CD8-positive, alpha-beta T cell (primary cell): ENCODE measurements at regions of chr7 and their contacts with region 1.

Region 1: GRCh38 chr7:1532483-1533424 is 2.3 kb downstream of the MAFK start:
- DNase-seq: peak in 8 of 9 experiments; percentile 42 to 75 (median 68)
- ATAC-seq: peak; percentile 48
- H3K4me3 ChIP-seq: peak overlapping the region; percentile 65 to 66
- H3K4me3 Mint-ChIP-seq: peak overlapping the region; percentile 89
- H3K27ac ChIP-seq: peak overlapping the region; percentile 82 to 90
- H3K27ac Mint-ChIP-seq: peak overlapping the region; percentile 99
- H3K4me1 ChIP-seq: peaks cover 33% of the 10 kb centered on the region
- H3K4me1 Mint-ChIP-seq: peaks cover 38% of the 10 kb centered on the region
- H3K27me3 ChIP-seq: no peaks in the 10 kb centered on the region
- H3K27me3 Mint-ChIP-seq: no peaks in the 10 kb centered on the region
- CTCF ChIP-seq: no peak

Region 2: DNA sequence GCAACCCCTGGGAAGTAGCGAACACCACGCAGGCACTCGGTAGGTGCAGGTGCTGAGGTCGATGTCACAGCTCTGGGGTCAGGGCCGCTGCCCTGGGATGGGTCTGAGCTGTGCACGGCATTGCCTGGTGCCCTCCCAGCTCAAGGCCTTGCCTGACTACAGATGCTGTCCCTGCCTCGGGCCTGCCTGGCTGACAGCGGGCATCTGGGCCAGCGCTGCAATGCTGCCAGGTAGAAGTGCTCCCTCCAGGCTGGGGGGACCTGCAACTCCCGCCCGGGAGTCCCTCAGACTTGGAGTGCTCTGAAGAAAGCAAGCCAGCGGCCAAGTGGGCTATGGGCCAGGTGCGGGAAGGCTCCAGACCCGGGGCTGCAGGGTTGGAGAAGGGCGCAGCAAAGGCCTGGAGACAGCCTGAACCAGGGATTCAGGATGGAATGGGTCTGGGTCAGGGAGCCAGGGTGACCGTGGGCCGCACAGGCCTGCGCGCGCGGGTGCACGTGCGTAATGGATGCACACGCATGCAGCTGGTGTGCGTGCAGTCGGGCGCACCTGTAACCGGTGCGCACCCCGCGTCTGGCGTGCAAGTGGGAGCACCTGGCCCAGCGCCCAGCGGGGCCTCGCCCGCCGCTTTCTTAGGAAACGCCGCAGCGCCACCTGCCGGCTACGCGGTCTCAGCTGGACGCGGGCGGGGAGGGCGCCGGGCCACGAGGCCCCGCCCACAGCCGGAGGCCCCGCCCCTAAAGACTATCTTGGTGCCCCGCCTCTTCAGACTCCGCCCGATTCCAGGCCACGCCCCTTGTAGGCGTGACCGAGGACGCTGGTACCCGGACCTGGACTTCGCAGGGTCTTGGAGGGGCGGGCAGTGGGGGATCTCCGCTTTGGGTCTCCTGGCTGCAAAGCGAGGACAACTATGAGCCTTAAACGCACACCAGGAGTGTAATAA is 120.2 kb before region 1 on chr7:
- CTCF ChIA-PET with region 1: no interaction called
- POLR2A ChIA-PET with region 1: no interaction called
- intact Hi-C with region 1: loop called in 1 of 2 experiments (anchors 5 kb)
- DNase-seq: peak; percentile 80 to 97 (median 89)
- ATAC-seq: peak; percentile 91
- H3K4me3 ChIP-seq: peak overlapping the region; percentile 23 to 30
- H3K4me3 Mint-ChIP-seq: peak overlapping the region; percentile 61
- H3K27ac ChIP-seq: peak overlapping the region in 1 of 2 experiments; percentile 22
- H3K27ac Mint-ChIP-seq: no peak overlapping the region
- H3K4me1 ChIP-seq: peaks cover 24% of the 10 kb centered on the region
- H3K4me1 Mint-ChIP-seq: peaks cover 13% of the 10 kb centered on the region
- H3K27me3 ChIP-seq: peaks cover 0 to 3% of the 10 kb centered on the region in 2 experiments
- H3K27me3 Mint-ChIP-seq: peaks cover 6% of the 10 kb centered on the region
- CTCF ChIP-seq: peak; percentile 81

Region 3: DNA sequence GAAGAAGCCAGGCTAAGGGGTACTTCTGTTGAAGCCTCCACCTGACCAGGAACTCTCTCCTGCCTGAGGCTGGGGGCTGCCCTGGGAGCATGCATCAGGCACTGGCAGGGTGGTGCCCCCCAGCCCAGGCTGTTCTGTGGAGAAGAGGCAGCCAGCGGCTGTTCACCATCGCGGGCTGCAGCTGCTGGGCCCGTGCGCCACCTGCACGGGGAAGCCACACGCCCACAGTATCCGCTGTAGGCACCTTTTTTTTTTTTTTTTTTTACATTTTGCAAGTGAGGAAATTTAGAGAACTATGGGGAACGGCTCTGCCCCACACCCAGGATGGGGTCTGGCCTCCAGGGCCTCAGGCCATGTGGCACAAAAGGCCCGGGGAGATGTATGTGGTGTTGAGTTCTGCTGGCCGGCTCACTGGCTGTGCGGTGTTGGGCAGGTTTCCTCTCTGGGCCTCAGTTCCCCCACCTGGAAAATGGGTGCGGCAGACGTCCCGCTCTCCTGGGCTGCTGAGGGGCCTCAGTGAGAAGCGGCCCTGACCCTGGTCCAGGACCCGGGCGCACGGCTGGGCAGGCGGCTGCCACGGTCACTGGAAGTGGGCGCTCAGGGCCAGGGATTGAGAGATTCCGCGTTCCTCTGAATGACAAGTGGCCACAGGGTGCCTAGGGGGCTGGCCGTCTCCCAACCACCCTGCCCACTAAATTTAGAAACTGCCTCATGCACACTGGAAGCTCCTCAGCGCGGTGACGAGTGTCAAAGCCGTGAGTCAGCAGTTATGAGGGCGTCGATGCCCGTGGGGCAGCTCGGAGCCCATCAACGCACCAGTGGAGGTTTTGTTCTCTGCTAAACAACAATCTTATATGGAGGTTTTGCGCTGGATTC is 19.7 kb before region 1 on chr7:
- CTCF ChIA-PET with region 1: interaction called, 4 read pairs
- POLR2A ChIA-PET with region 1: interaction called, 4 read pairs
- intact Hi-C with region 1: loop called in 1 of 2 experiments (anchors 2 kb)
- DNase-seq: peak in 8 of 9 experiments; percentile 38 to 76 (median 58)
- ATAC-seq: peak; percentile 91
- H3K4me3 ChIP-seq: no peak overlapping the region
- H3K4me3 Mint-ChIP-seq: peak overlapping the region; percentile 35
- H3K27ac ChIP-seq: no peak overlapping the region
- H3K27ac Mint-ChIP-seq: peak overlapping the region; percentile 69
- H3K4me1 ChIP-seq: peaks cover 43% of the 10 kb centered on the region
- H3K4me1 Mint-ChIP-seq: peaks cover 36% of the 10 kb centered on the region
- H3K27me3 ChIP-seq: no peaks in the 10 kb centered on the region
- H3K27me3 Mint-ChIP-seq: no peaks in the 10 kb centered on the region
- CTCF ChIP-seq: no peak

Region 4: DNA sequence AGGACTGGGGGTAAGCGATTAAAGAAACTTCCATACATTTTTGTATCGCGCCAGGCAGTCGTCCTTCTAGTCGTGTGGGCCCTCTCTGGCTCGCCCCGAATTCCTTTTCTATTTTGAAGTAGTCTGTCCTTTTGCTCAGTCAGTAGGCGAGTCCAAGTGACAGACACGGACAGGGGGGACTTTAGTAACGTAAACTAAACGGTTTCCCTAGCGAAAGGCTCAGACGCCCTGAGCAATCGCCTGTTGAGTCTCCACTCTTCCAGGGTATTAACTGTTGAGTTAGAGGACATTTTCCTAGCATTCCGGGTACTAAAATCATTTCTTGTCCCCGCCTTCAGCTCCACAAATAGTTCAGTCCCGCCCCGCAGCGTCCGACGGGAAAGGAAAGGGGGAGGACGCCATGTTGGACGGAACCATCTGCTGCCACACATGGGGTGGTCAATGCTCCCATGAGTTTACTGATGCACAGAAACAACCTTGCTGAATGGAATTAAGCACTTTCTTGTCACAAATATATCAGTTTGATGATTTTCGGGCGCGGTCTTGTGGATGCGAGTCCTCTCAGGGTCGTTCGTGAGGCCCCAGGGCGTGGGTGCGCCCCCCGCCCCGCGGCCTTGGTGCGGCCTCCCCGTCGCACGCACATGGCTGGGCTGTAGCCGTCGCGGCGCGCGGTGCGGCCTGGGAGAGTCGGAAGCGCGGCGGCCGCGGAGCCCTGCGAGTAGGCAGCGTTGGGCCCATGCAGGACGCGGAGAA is 821.6 kb after region 1 on chr7 and contains the start of gene EIF3B:
- CTCF ChIA-PET with region 1: no interaction called
- POLR2A ChIA-PET with region 1: no interaction called
- intact Hi-C with region 1: loop called in 1 of 2 experiments (anchors 1 kb)
- DNase-seq: peak; percentile 80 to 97 (median 90)
- ATAC-seq: peak; percentile 84
- H3K4me3 ChIP-seq: peak within 1 kb of the TSS; percentile 72 to 74
- H3K4me3 Mint-ChIP-seq: peak within 1 kb of the TSS; percentile 88
- H3K27ac ChIP-seq: peak within 1 kb of the TSS; percentile 99
- H3K27ac Mint-ChIP-seq: peak within 1 kb of the TSS; percentile 99
- H3K4me1 ChIP-seq: peaks cover 45% of the 10 kb centered on the region
- H3K4me1 Mint-ChIP-seq: peaks cover 40% of the 10 kb centered on the region
- H3K27me3 ChIP-seq: no peaks in the 10 kb centered on the region
- H3K27me3 Mint-ChIP-seq: no peaks in the 10 kb centered on the region
- CTCF ChIP-seq: no peak
- total RNA-seq, gene EIF3B: 234 to 239 TPM

Region 5: GRCh38 chr7:2632733-2633537 is 1100.2 kb after region 1 on chr7:
- CTCF ChIA-PET with region 1: no interaction called
- POLR2A ChIA-PET with region 1: no interaction called
- intact Hi-C with region 1: loop called in 1 of 2 experiments (anchors 5 kb)
- DNase-seq: peak in 7 of 9 experiments; percentile 15 to 60 (median 48)
- ATAC-seq: peak; percentile 4
- H3K4me3 ChIP-seq: peak overlapping the region; percentile 69 to 79
- H3K4me3 Mint-ChIP-seq: peak overlapping the region; percentile 88
- H3K27ac ChIP-seq: peak overlapping the region; percentile 43 to 53
- H3K27ac Mint-ChIP-seq: peak overlapping the region; percentile 77
- H3K4me1 ChIP-seq: peaks cover 25% of the 10 kb centered on the region
- H3K4me1 Mint-ChIP-seq: peaks cover 14% of the 10 kb centered on the region
- H3K27me3 ChIP-seq: no peaks in the 10 kb centered on the region
- H3K27me3 Mint-ChIP-seq: no peaks in the 10 kb centered on the region
- CTCF ChIP-seq: no peak